ENCODE measurements at regions of chr16 and their contacts with region 1.

Region 1: DNA sequence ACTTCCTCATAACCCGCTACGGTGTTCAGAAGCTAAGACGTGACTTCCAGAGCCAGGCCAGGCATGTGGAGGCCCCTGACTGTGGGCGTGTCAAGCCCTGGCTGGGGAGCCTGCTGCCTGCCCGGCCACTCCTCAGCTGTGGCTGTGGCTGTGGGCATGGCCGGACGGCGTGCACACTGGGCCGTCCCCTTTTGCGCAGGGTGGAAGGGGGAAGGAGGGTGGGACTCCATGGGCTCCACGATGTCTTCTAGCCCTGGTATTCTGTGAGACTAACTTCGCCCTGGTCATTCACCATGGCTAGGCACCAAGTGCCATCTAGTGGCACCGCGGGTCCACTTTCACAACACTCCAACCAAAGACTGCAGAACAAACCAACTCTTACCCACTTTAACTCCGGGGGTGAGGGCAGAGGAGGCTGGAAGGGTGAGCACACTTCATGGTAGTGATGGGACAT is 67.9 kb downstream of the N4BP1 start:
- DNase-seq: peak; percentile 35 to 37
- ATAC-seq: peak; percentile 50 to 77 (median 68)
- H3K4me3 ChIP-seq: no peak overlapping the region
- H3K27ac ChIP-seq: peak overlapping the region in 2 of 10 donors; percentile 4 to 19
- H3K4me1 ChIP-seq: peaks cover 15 to 50% (median 27%) of the 10 kb centered on the region in 9 donors
- H3K27me3 ChIP-seq: no peaks in the 10 kb centered on the region
- CTCF ChIP-seq: peak; percentile 27 to 72 (median 60)

Region 2: DNA sequence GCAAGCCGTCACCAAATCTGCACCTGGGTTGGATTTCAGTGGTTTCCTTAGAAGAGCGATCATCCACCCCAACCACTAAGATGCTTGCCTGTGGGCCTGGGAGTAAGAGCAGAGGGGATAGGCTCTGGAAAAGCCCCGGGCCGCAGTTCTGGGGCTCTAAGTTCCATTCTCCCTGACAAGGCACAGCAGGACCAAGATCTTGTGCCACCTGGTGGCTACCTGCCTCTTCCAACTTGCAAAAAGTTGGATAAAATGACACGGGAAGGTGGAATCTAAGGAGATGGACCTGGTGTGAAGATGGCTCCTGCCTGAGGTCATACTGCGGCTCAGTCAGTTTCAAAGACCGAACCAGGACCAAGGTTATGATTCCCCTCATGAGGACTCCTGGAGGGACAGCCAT is 428.6 kb before region 1 on chr16:
- intact Hi-C with region 1: no loop called
- DNase-seq: no peak
- ATAC-seq: peak in 1 of 8 donors; percentile 23
- H3K4me3 ChIP-seq: no peak overlapping the region
- H3K27ac ChIP-seq: no peak overlapping the region
- H3K4me1 ChIP-seq: peaks cover 0 to 17% (median 4%) of the 10 kb centered on the region in 9 donors
- H3K27me3 ChIP-seq: no peaks in the 10 kb centered on the region
- CTCF ChIP-seq: peak in 3 of 9 donors; percentile 6 to 21 (median 6)

Region 3: GRCh38 chr16:48244080-48244862 is 297.8 kb before region 1 on chr16 and contains the start of gene LONP2:
- intact Hi-C with region 1: loop called in 3 of 10 experiments (anchors 10 kb)
- DNase-seq: peak; percentile 93
- ATAC-seq: peak; percentile 99 to 100 (median 100)
- H3K4me3 ChIP-seq: peak within 1 kb of the TSS; percentile 63 to 98 (median 84)
- H3K27ac ChIP-seq: peak within 1 kb of the TSS; percentile 28 to 95 (median 86)
- H3K4me1 ChIP-seq: peaks cover 3 to 51% (median 34%) of the 10 kb centered on the region in 9 donors
- H3K27me3 ChIP-seq: no peaks in the 10 kb centered on the region
- CTCF ChIP-seq: no peak
- total RNA-seq, gene LONP2: 66.2 to 86.6 (median 75.4) TPM

Region 4: GRCh38 chr16:48284772-48285409 is 257.2 kb before region 1 on chr16:
- intact Hi-C with region 1: loop called in 1 of 10 experiments (anchors 10 kb)
- DNase-seq: no peak
- ATAC-seq: no peak
- H3K4me3 ChIP-seq: no peak overlapping the region
- H3K27ac ChIP-seq: no peak overlapping the region
- H3K4me1 ChIP-seq: peaks cover 5 to 39% (median 31%) of the 10 kb centered on the region in 9 donors
- H3K27me3 ChIP-seq: no peaks in the 10 kb centered on the region
- CTCF ChIP-seq: no peak

Region 5: DNA sequence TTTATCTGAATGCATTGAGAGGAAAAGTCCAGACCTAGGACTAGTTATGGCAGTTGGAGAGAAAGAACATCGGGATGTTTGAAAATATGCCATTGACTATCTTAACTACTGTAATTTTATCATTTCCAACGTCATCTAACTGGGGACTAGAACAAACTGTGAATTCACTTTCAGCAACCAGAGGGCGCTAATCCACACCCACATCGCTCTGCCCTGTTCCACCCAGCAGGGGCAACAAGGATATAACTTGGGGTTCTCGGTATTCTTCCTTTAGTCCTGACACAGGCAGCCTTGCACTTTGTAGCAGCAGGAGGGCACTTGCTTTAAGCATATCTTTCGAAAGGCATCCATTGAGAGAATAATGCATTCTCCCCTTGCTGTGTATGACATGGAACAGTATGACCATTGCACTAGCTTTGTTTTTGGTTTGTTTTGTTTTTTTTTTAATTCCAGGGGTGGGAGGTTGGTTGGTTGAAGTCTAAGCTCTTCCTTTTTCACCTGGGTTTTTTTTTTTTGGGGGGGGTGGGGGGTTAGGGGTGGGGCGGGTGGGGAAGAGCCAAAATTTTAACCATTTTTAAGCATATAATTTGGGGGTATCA is 188.4 kb before region 1 on chr16:
- intact Hi-C with region 1: loop called in 9 of 10 experiments (anchors 5 to 10 kb)
- DNase-seq: peak in 1 of 2 donors; percentile 61
- ATAC-seq: peak; percentile 73 to 87 (median 85)
- H3K4me3 ChIP-seq: no peak overlapping the region
- H3K27ac ChIP-seq: no peak overlapping the region
- H3K4me1 ChIP-seq: peaks cover 0 to 30% (median 9%) of the 10 kb centered on the region in 9 donors
- H3K27me3 ChIP-seq: no peaks in the 10 kb centered on the region
- CTCF ChIP-seq: peak; percentile 72 to 91 (median 87)

Region 6: DNA sequence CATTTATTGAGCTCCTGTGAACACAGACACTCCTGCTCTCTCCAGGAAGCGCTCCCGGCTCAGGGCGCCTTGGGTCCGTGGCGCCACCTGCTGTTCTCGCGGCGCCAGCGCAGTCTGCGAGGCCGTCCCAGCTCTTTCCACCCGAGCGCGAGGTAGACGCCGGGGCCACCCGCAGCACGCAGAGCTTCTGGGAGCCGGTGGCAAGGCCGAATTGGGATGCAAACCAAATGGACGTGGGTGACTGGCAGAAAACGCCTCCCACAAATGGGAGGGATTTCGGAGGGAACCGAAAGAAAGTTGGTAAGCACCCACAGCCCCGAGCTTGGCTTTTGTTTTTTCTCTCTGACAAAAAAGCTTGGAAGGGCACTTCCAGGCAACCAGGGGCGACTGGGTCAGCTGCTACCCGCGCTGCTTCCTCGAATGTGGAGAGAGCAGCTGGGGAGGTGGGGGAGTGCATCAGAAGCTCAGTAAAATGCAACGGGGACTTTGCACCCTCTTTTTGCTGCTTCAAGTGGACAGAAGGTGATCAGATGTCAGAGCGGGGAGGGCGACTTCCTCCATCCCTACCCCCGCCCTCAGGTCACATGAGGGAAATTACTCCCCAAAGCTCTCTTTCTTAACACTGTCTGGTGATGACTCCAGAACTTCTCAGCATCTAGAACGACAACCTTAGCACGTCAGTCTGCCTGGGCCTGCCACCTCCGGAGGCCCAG is 81.4 kb after region 1 on chr16:
- intact Hi-C with region 1: loop called in 9 of 10 experiments (anchors 5 kb)
- DNase-seq: peak; percentile 79 to 87
- ATAC-seq: peak; percentile 94 to 98 (median 95)
- H3K4me3 ChIP-seq: peak overlapping the region; percentile 9 to 65 (median 52)
- H3K27ac ChIP-seq: peak overlapping the region in 9 of 10 donors; percentile 50 to 89 (median 73)
- H3K4me1 ChIP-seq: peaks cover 2 to 51% (median 36%) of the 10 kb centered on the region in 9 donors
- H3K27me3 ChIP-seq: no peaks in the 10 kb centered on the region
- CTCF ChIP-seq: peak; percentile 97 to 100 (median 99)